ENCODE measurements at regions of chr9 and their contacts with region 1.

Region 1: GRCh38 chr9:95462249-95463147 is 54.3 kb downstream of the PTCH1 start:
- DNase-seq: peak; percentile 80
- ATAC-seq: peak; percentile 97
- H3K4me3 ChIP-seq: peak overlapping the region in 3 of 5 experiments; percentile 3 to 52 (median 23)
- H3K4me3 Mint-ChIP-seq: peak overlapping the region; percentile 82
- H3K27ac ChIP-seq: no peak overlapping the region
- H3K27ac Mint-ChIP-seq: peak overlapping the region; percentile 18
- H3K4me1 ChIP-seq: peaks cover 19 to 24% of the 10 kb centered on the region in 2 donors
- H3K4me1 Mint-ChIP-seq: peaks cover 26% of the 10 kb centered on the region
- H3K27me3 ChIP-seq: peaks cover 0 to 20% (median 13%) of the 10 kb centered on the region in 4 experiments
- H3K27me3 Mint-ChIP-seq: peaks cover 54% of the 10 kb centered on the region
- CTCF ChIP-seq: no peak

Region 2: GRCh38 chr9:95092262-95093072 is 370.0 kb before region 1 on chr9:
- CTCF ChIA-PET with region 1: no interaction called
- POLR2A ChIA-PET with region 1: no interaction called
- intact Hi-C with region 1: no loop called
- DNase-seq: no peak
- ATAC-seq: no peak
- H3K4me3 ChIP-seq: no peak overlapping the region
- H3K4me3 Mint-ChIP-seq: no peak overlapping the region
- H3K27ac ChIP-seq: no peak overlapping the region
- H3K27ac Mint-ChIP-seq: no peak overlapping the region
- H3K4me1 ChIP-seq: no peaks in the 10 kb centered on the region
- H3K4me1 Mint-ChIP-seq: no peaks in the 10 kb centered on the region
- H3K27me3 ChIP-seq: peaks cover 0 to 2% (median 0%) of the 10 kb centered on the region in 4 experiments
- H3K27me3 Mint-ChIP-seq: no peaks in the 10 kb centered on the region
- CTCF ChIP-seq: no peak

Region 3: GRCh38 chr9:95327239-95327865 is 135.1 kb before region 1 on chr9:
- CTCF ChIA-PET with region 1: no interaction called
- POLR2A ChIA-PET with region 1: no interaction called
- intact Hi-C with region 1: no loop called
- DNase-seq: no peak
- ATAC-seq: no peak
- H3K4me3 ChIP-seq: no peak overlapping the region
- H3K4me3 Mint-ChIP-seq: no peak overlapping the region
- H3K27ac ChIP-seq: no peak overlapping the region
- H3K27ac Mint-ChIP-seq: no peak overlapping the region
- H3K4me1 ChIP-seq: no peaks in the 10 kb centered on the region
- H3K4me1 Mint-ChIP-seq: no peaks in the 10 kb centered on the region
- H3K27me3 ChIP-seq: peaks cover 0 to 2% (median 0%) of the 10 kb centered on the region in 4 experiments
- H3K27me3 Mint-ChIP-seq: peaks cover 9% of the 10 kb centered on the region
- CTCF ChIP-seq: no peak

Region 4: DNA sequence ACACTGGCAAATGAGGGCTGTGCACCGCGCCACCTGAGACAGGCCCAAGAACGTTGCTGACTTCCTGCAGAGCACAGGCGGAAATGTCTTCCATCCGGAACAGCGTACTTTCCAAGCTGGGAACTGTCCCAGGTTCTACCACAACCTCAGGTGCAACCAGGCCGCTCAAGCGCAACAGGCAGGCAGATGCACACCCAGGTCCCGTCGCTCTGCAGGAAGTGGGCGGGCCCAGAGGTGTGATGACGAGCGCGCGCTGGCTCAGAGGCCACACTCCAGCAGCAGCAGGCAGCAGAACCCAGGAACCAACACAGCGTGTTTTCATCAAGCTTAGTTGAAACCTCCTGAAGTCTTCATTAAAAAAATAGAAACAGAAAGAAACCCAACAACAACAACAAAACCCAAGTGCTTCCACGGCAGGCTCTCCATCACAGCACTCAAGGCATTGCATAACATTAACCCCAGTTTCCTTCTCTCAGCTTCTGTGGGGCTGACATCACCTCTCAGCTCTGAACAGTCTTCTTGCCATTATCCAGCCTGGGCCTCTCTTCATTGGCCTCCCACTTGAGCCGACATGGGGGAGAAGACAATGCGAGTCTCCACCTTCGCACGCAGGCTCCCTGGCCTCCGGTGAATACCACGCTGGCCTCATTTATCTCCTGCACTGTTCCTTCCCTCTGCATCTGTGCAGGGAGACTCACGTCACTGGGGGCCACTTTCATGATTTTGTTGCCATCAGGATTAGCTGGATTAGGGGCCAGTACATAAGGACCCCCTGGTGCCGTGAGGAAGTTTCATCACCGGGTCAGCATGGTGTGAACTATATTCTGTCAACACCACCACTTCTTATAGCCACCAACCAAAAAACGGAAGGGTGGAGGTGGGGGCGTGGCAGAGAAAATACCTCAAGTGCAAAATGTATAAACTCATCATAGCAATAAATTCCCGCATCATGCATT is 32.2 kb after region 1 on chr9:
- CTCF ChIA-PET with region 1: no interaction called
- POLR2A ChIA-PET with region 1: no interaction called
- intact Hi-C with region 1: loop called (anchors 1 kb)
- DNase-seq: peak; percentile 77
- ATAC-seq: peak; percentile 92
- H3K4me3 ChIP-seq: peak overlapping the region in 4 of 5 experiments; percentile 28 to 41 (median 36)
- H3K4me3 Mint-ChIP-seq: peak overlapping the region; percentile 89
- H3K27ac ChIP-seq: peak overlapping the region; percentile 35 to 64
- H3K27ac Mint-ChIP-seq: peak overlapping the region; percentile 95
- H3K4me1 ChIP-seq: peaks cover 14 to 20% of the 10 kb centered on the region in 2 donors
- H3K4me1 Mint-ChIP-seq: peaks cover 23% of the 10 kb centered on the region
- H3K27me3 ChIP-seq: peaks cover 0 to 4% (median 0%) of the 10 kb centered on the region in 4 experiments
- H3K27me3 Mint-ChIP-seq: peaks cover 35% of the 10 kb centered on the region
- CTCF ChIP-seq: no peak